Endothelial cell of umbilical vein (primary cell): ENCODE measurements at regions of chr3 and their contacts with region 1.

Region 1: DNA sequence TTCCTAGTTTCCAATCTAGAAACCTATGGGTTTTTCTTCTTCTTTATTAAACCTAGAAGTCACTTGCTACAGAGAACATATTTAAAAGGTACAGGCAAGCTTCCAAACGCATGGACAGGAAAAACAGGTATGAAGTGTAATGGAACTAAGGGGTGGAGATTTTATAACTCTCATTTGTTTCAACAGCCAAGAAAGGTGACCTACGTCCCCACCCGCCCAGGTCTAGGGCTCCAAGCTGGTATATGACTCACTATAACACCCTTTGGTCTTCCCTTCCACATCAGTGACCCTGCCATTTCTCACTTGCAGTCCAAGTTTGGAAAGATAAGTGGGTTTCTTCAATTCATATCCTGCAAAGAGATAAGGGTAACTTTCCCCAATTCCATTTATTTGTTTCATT is 6.0 kb upstream of the LIPH start:
- DNase-seq: no peak
- H3K4me3 ChIP-seq: no peak overlapping the region
- H3K27ac ChIP-seq: no peak overlapping the region
- H3K4me1 ChIP-seq: no peaks in the 10 kb centered on the region
- H3K27me3 ChIP-seq: peaks cover 9 to 10% of the 10 kb centered on the region in 2 experiments
- CTCF ChIP-seq: no peak
- POLR2A ChIP-seq: no peak

Region 2: GRCh38 chr3:184765730-184766074 is 792.7 kb before region 1 on chr3:
- CTCF ChIA-PET with region 1: no interaction called
- POLR2A ChIA-PET with region 1: no interaction called
- dilution Hi-C with region 1: no loop called
- intact Hi-C with region 1: no loop called
- DNase-seq: no peak
- H3K4me3 ChIP-seq: no peak overlapping the region
- H3K27ac ChIP-seq: no peak overlapping the region
- H3K4me1 ChIP-seq: no peaks in the 10 kb centered on the region
- H3K27me3 ChIP-seq: peaks cover 0 to 5% of the 10 kb centered on the region in 2 experiments
- CTCF ChIP-seq: no peak
- POLR2A ChIP-seq: no peak

Region 3: GRCh38 chr3:185353823-185354614 is 204.4 kb before region 1 on chr3:
- CTCF ChIA-PET with region 1: interaction called, 8 read pairs
- POLR2A ChIA-PET with region 1: no interaction called
- dilution Hi-C with region 1: no loop called
- intact Hi-C with region 1: loop called (anchors 1 kb)
- DNase-seq: peak; percentile 68
- H3K4me3 ChIP-seq: no peak overlapping the region
- H3K27ac ChIP-seq: no peak overlapping the region
- H3K4me1 ChIP-seq: no peaks in the 10 kb centered on the region
- H3K27me3 ChIP-seq: peaks cover 0 to 3% of the 10 kb centered on the region in 2 experiments
- CTCF ChIP-seq: peak; percentile 53 to 81
- POLR2A ChIP-seq: no peak

Region 4: DNA sequence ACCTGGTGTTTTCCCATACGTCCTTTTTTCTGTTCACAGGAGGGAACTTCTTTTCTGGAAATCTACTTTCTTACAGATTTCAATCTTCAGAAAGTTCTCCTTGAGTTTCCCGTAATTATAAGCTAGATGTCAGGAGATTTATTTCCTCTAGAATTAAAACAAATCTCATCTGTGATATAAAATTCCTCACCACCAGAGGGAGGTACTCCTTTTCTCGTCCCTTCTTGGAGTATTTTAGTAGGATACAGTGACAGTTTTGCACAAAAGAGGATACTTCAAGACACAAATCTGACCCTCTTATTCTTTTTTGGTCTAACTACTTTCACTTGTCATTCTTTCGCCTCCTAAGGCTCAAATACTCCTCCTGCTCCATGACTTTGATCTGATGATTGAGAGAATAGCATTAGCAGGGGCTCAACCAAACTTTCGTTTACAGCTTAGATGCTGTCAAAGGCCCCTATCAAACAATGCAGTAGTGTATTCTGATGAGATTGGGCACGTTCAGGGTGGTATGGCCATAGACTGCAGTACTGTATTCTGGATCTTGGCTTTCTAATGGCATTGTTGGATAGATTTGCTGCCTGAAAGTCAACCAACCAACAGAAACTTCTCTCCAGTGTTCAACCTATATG is 97.6 kb before region 1 on chr3:
- CTCF ChIA-PET with region 1: interaction called, 133 read pairs
- POLR2A ChIA-PET with region 1: no interaction called
- dilution Hi-C with region 1: no loop called
- intact Hi-C with region 1: loop called (anchors 1 kb)
- DNase-seq: peak; percentile 37
- H3K4me3 ChIP-seq: no peak overlapping the region
- H3K27ac ChIP-seq: no peak overlapping the region
- H3K4me1 ChIP-seq: no peaks in the 10 kb centered on the region
- H3K27me3 ChIP-seq: no peaks in the 10 kb centered on the region
- CTCF ChIP-seq: no peak
- POLR2A ChIP-seq: no peak

Region 5: GRCh38 chr3:185498503-185499396 is 59.6 kb before region 1 on chr3 and contains the start of gene TMEM41A:
- CTCF ChIA-PET with region 1: interaction called, 18 read pairs
- POLR2A ChIA-PET with region 1: no interaction called
- dilution Hi-C with region 1: no loop called
- intact Hi-C with region 1: loop called (anchors 1 kb)
- DNase-seq: peak; percentile 90
- H3K4me3 ChIP-seq: peak within 1 kb of the TSS; percentile 55 to 93 (median 77)
- H3K27ac ChIP-seq: peak within 1 kb of the TSS; percentile 14
- H3K4me1 ChIP-seq: peaks cover 5% of the 10 kb centered on the region
- H3K27me3 ChIP-seq: peaks cover 2 to 8% of the 10 kb centered on the region in 2 experiments
- CTCF ChIP-seq: no peak
- POLR2A ChIP-seq: peak; percentile 90
- total RNA-seq, gene TMEM41A: 16.0 and 16.8 TPM in 2 replicates

Region 6: GRCh38 chr3:185528532-185528931 is 29.9 kb before region 1 on chr3:
- CTCF ChIA-PET with region 1: interaction called, 24 read pairs
- POLR2A ChIA-PET with region 1: no interaction called
- dilution Hi-C with region 1: no loop called
- intact Hi-C with region 1: no loop called
- DNase-seq: no peak
- H3K4me3 ChIP-seq: no peak overlapping the region
- H3K27ac ChIP-seq: no peak overlapping the region
- H3K4me1 ChIP-seq: no peaks in the 10 kb centered on the region
- H3K27me3 ChIP-seq: no peaks in the 10 kb centered on the region
- CTCF ChIP-seq: no peak
- POLR2A ChIP-seq: no peak

Region 7: GRCh38 chr3:185572183-185572582 is 13.8 kb after region 1 on chr3:
- CTCF ChIA-PET with region 1: interaction called, 24 read pairs
- POLR2A ChIA-PET with region 1: no interaction called
- dilution Hi-C with region 1: no loop called
- intact Hi-C with region 1: no loop called
- DNase-seq: no peak
- H3K4me3 ChIP-seq: no peak overlapping the region
- H3K27ac ChIP-seq: no peak overlapping the region
- H3K4me1 ChIP-seq: no peaks in the 10 kb centered on the region
- H3K27me3 ChIP-seq: no peaks in the 10 kb centered on the region
- CTCF ChIP-seq: no peak
- POLR2A ChIP-seq: no peak

Region 8: GRCh38 chr3:185637388-185637787 is 79.0 kb after region 1 on chr3:
- CTCF ChIA-PET with region 1: no interaction called
- POLR2A ChIA-PET with region 1: no interaction called
- dilution Hi-C with region 1: no loop called
- intact Hi-C with region 1: no loop called
- DNase-seq: no peak
- H3K4me3 ChIP-seq: no peak overlapping the region
- H3K27ac ChIP-seq: no peak overlapping the region
- H3K4me1 ChIP-seq: no peaks in the 10 kb centered on the region
- H3K27me3 ChIP-seq: no peaks in the 10 kb centered on the region
- CTCF ChIP-seq: no peak
- POLR2A ChIP-seq: no peak

Region 9: DNA sequence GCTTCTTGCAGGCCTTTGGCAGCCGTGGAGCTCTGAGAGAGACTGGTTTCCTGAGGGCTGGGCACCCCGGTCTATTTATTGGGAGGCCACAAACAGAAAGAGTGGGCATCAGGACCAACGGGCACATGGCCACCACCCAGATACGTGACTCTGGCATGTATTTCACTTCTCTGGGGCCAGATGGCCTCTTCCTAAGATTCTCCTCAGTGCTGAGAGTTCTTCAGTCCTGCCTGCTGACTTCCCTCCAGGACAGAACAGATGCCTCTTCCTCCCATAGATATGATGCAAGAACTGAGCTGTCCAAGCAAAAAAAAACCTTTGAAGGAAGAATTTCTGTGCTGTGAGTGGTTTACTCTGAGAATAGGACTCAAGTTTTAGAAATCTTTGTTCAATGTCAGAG is 158.7 kb after region 1 on chr3:
- CTCF ChIA-PET with region 1: no interaction called
- POLR2A ChIA-PET with region 1: no interaction called
- dilution Hi-C with region 1: no loop called
- intact Hi-C with region 1: no loop called
- DNase-seq: peak; percentile 39
- H3K4me3 ChIP-seq: no peak overlapping the region
- H3K27ac ChIP-seq: peak overlapping the region; percentile 27
- H3K4me1 ChIP-seq: peaks cover 33% of the 10 kb centered on the region
- H3K27me3 ChIP-seq: no peaks in the 10 kb centered on the region
- CTCF ChIP-seq: no peak
- POLR2A ChIP-seq: no peak